IMR-90 (cell line): ENCODE measurements at regions of chr12 and their contacts with region 1.

Region 1: GRCh38 chr12:124388679-124389536 is 94.0 kb downstream of the RFLNA start:
- DNase-seq: peak; percentile 85
- ATAC-seq: peak; percentile 65
- H3K4me3 ChIP-seq: peak overlapping the region; percentile 97
- H3K27ac ChIP-seq: peak overlapping the region; percentile 98
- H3K4me1 ChIP-seq: peaks cover 62% of the 10 kb centered on the region
- H3K27me3 ChIP-seq: no peaks in the 10 kb centered on the region
- CTCF ChIP-seq: no peak
- POLR2A ChIP-seq: peak; percentile 94
- RAD21 ChIP-seq: peak; percentile 9; the same call in 1 of the 2 replicates

Region 2: DNA sequence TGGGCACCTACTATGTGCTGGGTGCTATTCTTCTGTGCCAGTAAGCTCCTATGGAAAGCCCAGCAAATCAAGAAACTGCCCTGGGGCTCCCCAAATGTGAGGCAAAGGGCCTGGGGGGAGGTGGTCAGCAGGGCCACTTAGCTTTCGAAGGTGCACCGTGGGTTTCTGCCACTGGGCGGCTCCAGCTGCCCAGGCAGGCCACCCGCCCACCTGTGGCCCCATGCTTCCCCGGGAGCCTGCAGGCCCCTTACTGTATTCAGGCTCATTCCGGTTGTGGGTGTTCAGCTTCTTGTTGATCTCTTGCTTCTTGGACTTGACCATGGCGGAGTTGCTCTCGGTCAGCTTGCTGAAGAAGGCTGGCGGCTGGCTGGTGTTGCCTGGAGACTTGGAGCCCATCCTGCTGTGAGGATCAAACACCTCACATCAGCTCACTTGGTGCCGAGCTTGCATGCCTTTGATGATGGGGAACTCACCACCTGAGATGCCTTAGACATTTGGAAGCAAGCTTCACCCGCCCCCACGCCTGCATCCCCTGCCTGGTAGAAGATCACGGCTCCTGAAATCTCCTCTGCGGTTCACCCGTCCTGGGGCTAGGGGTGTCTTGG is 56.7 kb before region 1 on chr12:
- CTCF ChIA-PET with region 1: no interaction called
- POLR2A ChIA-PET with region 1: no interaction called
- dilution Hi-C with region 1: no loop called
- in situ Hi-C with region 1: no loop called
- intact Hi-C with region 1: no loop called
- DNase-seq: no peak
- ATAC-seq: no peak
- H3K4me3 ChIP-seq: no peak overlapping the region
- H3K27ac ChIP-seq: no peak overlapping the region
- H3K4me1 ChIP-seq: no peaks in the 10 kb centered on the region
- H3K27me3 ChIP-seq: no peaks in the 10 kb centered on the region
- CTCF ChIP-seq: 0 out of 2 replicates have a peak, but pooled peaks have one; percentile 19
- POLR2A ChIP-seq: no peak
- RAD21 ChIP-seq: no peak

Region 3: GRCh38 chr12:124347716-124348357 is 41.1 kb before region 1 on chr12:
- CTCF ChIA-PET with region 1: no interaction called
- POLR2A ChIA-PET with region 1: no interaction called
- dilution Hi-C with region 1: no loop called
- in situ Hi-C with region 1: no loop called
- intact Hi-C with region 1: no loop called
- DNase-seq: no peak
- ATAC-seq: no peak
- H3K4me3 ChIP-seq: no peak overlapping the region
- H3K27ac ChIP-seq: no peak overlapping the region
- H3K4me1 ChIP-seq: no peaks in the 10 kb centered on the region
- H3K27me3 ChIP-seq: no peaks in the 10 kb centered on the region
- CTCF ChIP-seq: peak; percentile 44
- POLR2A ChIP-seq: no peak
- RAD21 ChIP-seq: peak; percentile 43

Region 4: DNA sequence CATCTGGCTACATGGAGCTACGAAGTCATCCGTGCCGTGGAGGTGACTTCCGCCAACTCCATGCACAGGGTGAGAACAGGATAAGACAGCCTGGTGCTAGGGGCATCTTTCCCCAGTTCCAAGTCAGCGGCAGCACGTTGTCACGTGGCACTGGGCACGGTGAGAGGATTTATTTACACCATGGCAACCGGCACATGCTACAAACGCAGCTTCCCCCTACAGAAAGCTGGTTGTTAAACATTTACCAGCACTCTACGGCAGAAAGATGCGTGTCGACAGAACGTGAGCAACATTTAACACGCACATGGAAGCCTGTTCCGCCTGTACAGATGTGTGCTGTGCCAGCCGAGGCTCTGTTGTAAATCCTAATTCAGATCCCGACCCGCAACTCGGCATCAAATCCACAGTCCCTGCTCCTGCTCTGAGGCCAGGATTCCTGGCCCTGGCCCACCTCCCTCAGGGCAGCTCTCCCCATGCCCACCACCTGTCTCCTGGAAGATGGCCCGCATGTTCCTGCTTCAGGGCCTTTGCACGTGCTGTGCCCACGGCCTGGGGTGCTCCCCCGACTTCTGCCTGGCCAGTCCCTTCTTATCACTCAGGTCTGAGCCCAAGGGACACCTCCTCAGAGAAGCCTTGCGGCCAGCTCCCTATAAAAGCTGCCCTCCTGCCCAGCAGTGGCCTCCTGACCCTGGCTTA is 20.1 kb after region 1 on chr12:
- CTCF ChIA-PET with region 1: no interaction called
- POLR2A ChIA-PET with region 1: interaction called, 10 read pairs
- dilution Hi-C with region 1: no loop called
- in situ Hi-C with region 1: no loop called
- intact Hi-C with region 1: no loop called
- DNase-seq: no peak
- ATAC-seq: no peak
- H3K4me3 ChIP-seq: no peak overlapping the region
- H3K27ac ChIP-seq: no peak overlapping the region
- H3K4me1 ChIP-seq: peaks cover 29% of the 10 kb centered on the region
- H3K27me3 ChIP-seq: no peaks in the 10 kb centered on the region
- CTCF ChIP-seq: no peak
- POLR2A ChIP-seq: no peak
- RAD21 ChIP-seq: no peak

Region 5: GRCh38 chr12:124422570-124423523 is 33.9 kb after region 1 on chr12:
- CTCF ChIA-PET with region 1: no interaction called
- POLR2A ChIA-PET with region 1: interaction called, 3 read pairs
- dilution Hi-C with region 1: no loop called
- in situ Hi-C with region 1: no loop called
- intact Hi-C with region 1: loop called (anchors 2 kb)
- DNase-seq: peak; percentile 94
- ATAC-seq: peak; percentile 82
- H3K4me3 ChIP-seq: peak overlapping the region; percentile 10; the same call in 1 of the 2 replicates
- H3K27ac ChIP-seq: peak overlapping the region; percentile 87
- H3K4me1 ChIP-seq: peaks cover 32% of the 10 kb centered on the region
- H3K27me3 ChIP-seq: no peaks in the 10 kb centered on the region
- CTCF ChIP-seq: no peak
- POLR2A ChIP-seq: peak; percentile 52
- RAD21 ChIP-seq: peak; percentile 22

Region 6: GRCh38 chr12:124497658-124498057 is 108.8 kb after region 1 on chr12:
- CTCF ChIA-PET with region 1: no interaction called
- POLR2A ChIA-PET with region 1: no interaction called
- dilution Hi-C with region 1: no loop called
- in situ Hi-C with region 1: no loop called
- intact Hi-C with region 1: loop called (anchors 5 kb)
- DNase-seq: peak; percentile 96
- ATAC-seq: peak; percentile 80
- H3K4me3 ChIP-seq: no peak overlapping the region
- H3K27ac ChIP-seq: peak overlapping the region; percentile 75
- H3K4me1 ChIP-seq: peaks cover 34% of the 10 kb centered on the region
- H3K27me3 ChIP-seq: no peaks in the 10 kb centered on the region
- CTCF ChIP-seq: 0 out of 2 replicates have a peak, but pooled peaks have one; percentile 4
- POLR2A ChIP-seq: peak; percentile 78
- RAD21 ChIP-seq: peak; percentile 34; the same call in 1 of the 2 replicates

Region 7: GRCh38 chr12:124518051-124518932 is 129.4 kb after region 1 on chr12:
- CTCF ChIA-PET with region 1: no interaction called
- POLR2A ChIA-PET with region 1: interaction called, 8 read pairs
- dilution Hi-C with region 1: no loop called
- in situ Hi-C with region 1: no loop called
- intact Hi-C with region 1: loop called (anchors 5 kb)
- DNase-seq: peak; percentile 99
- ATAC-seq: peak; percentile 78
- H3K4me3 ChIP-seq: peak overlapping the region; percentile 19
- H3K27ac ChIP-seq: peak overlapping the region; percentile 85
- H3K4me1 ChIP-seq: peaks cover 37% of the 10 kb centered on the region
- H3K27me3 ChIP-seq: no peaks in the 10 kb centered on the region
- CTCF ChIP-seq: no peak
- POLR2A ChIP-seq: no peak; the same call in 1 of the 2 replicates
- RAD21 ChIP-seq: peak; percentile 20; the same call in 1 of the 2 replicates

Region 8: GRCh38 chr12:124761056-124761455 is 372.1 kb after region 1 on chr12:
- CTCF ChIA-PET with region 1: no interaction called
- POLR2A ChIA-PET with region 1: interaction called, 11 read pairs
- dilution Hi-C with region 1: no loop called
- in situ Hi-C with region 1: loop called (anchors 5 kb)
- intact Hi-C with region 1: loop called (anchors 5 kb)
- DNase-seq: no peak
- ATAC-seq: no peak
- H3K4me3 ChIP-seq: no peak overlapping the region
- H3K27ac ChIP-seq: no peak overlapping the region
- H3K4me1 ChIP-seq: peaks cover 15% of the 10 kb centered on the region
- H3K27me3 ChIP-seq: peaks cover 7% of the 10 kb centered on the region; the same call in 1 of the 2 replicates
- CTCF ChIP-seq: no peak
- POLR2A ChIP-seq: no peak
- RAD21 ChIP-seq: no peak